ENCODE measurements at regions of chr7 and their contacts with region 1.

Region 1: GRCh38 chr7:116354546-116355408 is 144.4 kb downstream of the TES start:
- DNase-seq: peak; percentile 98
- H3K4me3 ChIP-seq: peak overlapping the region; percentile 26 to 42 (median 31)
- H3K27ac ChIP-seq: peak overlapping the region; percentile 100
- H3K4me1 ChIP-seq: peaks cover 53% of the 10 kb centered on the region
- H3K27me3 ChIP-seq: no peaks in the 10 kb centered on the region
- CTCF ChIP-seq: no peak

Region 2: GRCh38 chr7:116316833-116317612 is 37.8 kb before region 1 on chr7:
- CTCF ChIA-PET with region 1: no interaction called
- dilution Hi-C with region 1: no loop called
- in situ Hi-C with region 1: no loop called
- intact Hi-C with region 1: loop called (anchors 1 kb)
- DNase-seq: peak; percentile 100
- H3K4me3 ChIP-seq: peak overlapping the region in 2 of 3 experiments; percentile 4 to 10
- H3K27ac ChIP-seq: peak overlapping the region; percentile 94
- H3K4me1 ChIP-seq: peaks cover 24% of the 10 kb centered on the region
- H3K27me3 ChIP-seq: no peaks in the 10 kb centered on the region
- CTCF ChIP-seq: no peak

Region 3: GRCh38 chr7:116395125-116395791 is 40.5 kb after region 1 on chr7:
- CTCF ChIA-PET with region 1: no interaction called
- dilution Hi-C with region 1: no loop called
- in situ Hi-C with region 1: no loop called
- intact Hi-C with region 1: loop called (anchors 2 kb)
- DNase-seq: peak; percentile 93
- H3K4me3 ChIP-seq: peak overlapping the region in 1 of 3 experiments; percentile 2
- H3K27ac ChIP-seq: peak overlapping the region; percentile 98
- H3K4me1 ChIP-seq: peaks cover 32% of the 10 kb centered on the region
- H3K27me3 ChIP-seq: no peaks in the 10 kb centered on the region
- CTCF ChIP-seq: no peak

Region 4: GRCh38 chr7:116434820-116435341 is 80.1 kb after region 1 on chr7:
- CTCF ChIA-PET with region 1: no interaction called
- dilution Hi-C with region 1: no loop called
- in situ Hi-C with region 1: no loop called
- intact Hi-C with region 1: loop called (anchors 2 kb)
- DNase-seq: peak; percentile 87
- H3K4me3 ChIP-seq: no peak overlapping the region
- H3K27ac ChIP-seq: peak overlapping the region; percentile 92
- H3K4me1 ChIP-seq: peaks cover 34% of the 10 kb centered on the region
- H3K27me3 ChIP-seq: no peaks in the 10 kb centered on the region
- CTCF ChIP-seq: no peak

Region 5: DNA sequence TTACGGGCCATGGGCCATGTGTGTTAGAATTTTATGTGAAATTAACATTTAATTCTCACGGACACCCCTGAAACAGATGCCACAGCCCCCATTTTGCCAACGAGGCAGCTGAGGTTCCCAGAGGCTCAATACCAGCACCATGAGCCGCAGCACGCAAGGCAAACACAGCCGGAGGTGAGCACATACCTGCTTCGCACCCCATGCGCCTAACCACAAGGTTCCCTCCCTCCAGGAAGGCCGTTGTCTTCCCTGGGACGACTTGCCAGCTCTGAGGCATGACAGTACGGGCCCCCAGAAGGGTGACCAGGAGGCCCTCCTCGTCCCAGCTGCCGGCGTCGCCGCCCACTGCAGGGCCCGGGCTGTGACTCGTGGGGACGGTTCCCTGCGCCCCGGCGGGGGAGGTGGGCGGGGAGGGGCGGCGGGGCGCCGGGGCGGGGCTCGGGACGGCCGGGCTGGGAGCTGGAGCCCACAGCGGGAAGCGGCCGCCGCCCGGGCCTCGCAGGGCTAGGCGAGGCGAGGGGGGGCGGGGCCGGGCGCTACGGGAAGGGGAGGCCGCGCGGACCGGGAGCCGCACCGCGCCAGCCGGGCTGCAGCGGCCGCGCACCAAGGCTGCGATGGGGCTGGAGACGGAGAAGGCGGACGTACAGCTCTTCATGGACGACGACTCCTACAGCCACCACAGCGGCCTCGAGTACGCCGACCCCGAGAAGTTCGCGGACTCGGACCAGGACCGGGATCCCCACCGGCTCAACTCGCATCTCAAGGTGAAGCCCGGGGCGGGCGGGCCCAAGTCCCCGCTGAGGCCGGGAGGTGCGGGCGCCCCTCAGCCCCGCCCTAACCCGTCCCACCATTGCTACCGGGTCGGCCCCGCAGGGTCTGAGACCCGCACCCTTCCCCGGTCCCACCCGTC is 144.6 kb after region 1 on chr7 and contains the start of gene CAV2:
- CTCF ChIA-PET with region 1: no interaction called
- dilution Hi-C with region 1: no loop called
- in situ Hi-C with region 1: loop called in 1 of 2 experiments (anchors 10 kb)
- intact Hi-C with region 1: loop called (anchors 1 kb)
- DNase-seq: peak; percentile 96
- H3K4me3 ChIP-seq: peak within 1 kb of the TSS; percentile 59 to 98 (median 80)
- H3K27ac ChIP-seq: peak within 1 kb of the TSS; percentile 99
- H3K4me1 ChIP-seq: peaks cover 34% of the 10 kb centered on the region
- H3K27me3 ChIP-seq: no peaks in the 10 kb centered on the region
- CTCF ChIP-seq: no peak
- total RNA-seq, gene CAV2: 253 to 385 TPM